Activated CD8-positive, alpha-beta T cell treated with anti-CD3 and anti-CD28 coated beads for 36 hours (primary cell): ENCODE measurements at regions of chr1 and their contacts with region 1.

Region 1: DNA sequence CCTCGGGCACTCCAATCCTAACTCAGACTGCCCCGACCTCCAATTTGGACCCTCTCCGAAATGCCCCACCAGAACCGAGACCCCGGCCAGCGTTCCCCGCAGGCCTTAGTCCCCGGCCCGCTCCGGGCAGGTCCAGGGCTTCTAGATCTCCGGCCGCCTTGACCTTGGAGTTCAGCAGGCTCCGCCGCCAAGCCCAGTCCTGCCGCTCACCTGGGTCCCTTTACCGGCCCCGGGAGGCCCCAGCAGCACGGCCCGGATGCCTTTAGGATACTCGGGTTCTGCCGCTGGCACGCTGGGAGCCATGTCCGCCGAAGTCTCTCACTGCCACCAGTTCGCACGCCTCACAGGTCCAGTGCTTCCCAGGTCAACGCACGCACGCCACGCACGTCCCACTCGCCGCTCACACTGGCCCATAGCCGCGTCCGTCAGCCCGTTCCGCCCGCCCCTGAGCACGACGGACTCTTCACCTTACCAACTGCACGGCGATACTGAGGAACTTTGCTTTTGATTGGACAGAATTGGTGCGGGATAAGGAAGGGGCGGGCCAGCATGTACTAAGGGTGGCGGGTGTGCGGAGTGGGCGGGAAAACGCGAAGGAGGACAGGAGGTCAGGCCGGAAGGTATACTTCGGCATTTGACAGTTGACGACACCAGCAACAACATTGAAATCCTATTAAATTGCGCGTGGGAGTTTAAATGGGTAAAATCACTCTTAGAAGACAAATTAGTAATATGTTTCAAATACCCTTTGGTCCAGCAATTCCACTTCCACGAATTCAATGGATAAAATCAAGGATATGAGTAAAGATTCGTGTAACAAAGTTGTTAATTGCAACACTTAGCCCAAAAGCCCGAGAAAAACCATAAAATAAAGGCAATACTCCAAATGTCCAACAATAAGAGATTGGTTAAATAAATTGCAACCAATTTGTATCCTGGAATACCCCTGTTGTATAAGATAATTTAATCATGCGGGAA is at the start of gene AK2:
- DNase-seq: peak; percentile 97
- ATAC-seq: peak; percentile 100
- H3K4me3 Mint-ChIP-seq: peak within 1 kb of the TSS; percentile 99
- H3K27ac Mint-ChIP-seq: peak within 1 kb of the TSS; percentile 89
- H3K4me1 Mint-ChIP-seq: peaks cover 33% of the 10 kb centered on the region
- H3K27me3 Mint-ChIP-seq: no peaks in the 10 kb centered on the region
- CTCF ChIP-seq: no peak
- total RNA-seq, gene AK2: 404 TPM

Region 2: GRCh38 chr1:32925403-32926162 is 111.2 kb before region 1 on chr1:
- CTCF ChIA-PET with region 1: no interaction called
- POLR2A ChIA-PET with region 1: no interaction called
- intact Hi-C with region 1: loop called (anchors 10 kb)
- DNase-seq: peak; percentile 35
- ATAC-seq: peak; percentile 60
- H3K4me3 Mint-ChIP-seq: peak overlapping the region; percentile 13
- H3K27ac Mint-ChIP-seq: no peak overlapping the region
- H3K4me1 Mint-ChIP-seq: peaks cover 12% of the 10 kb centered on the region
- H3K27me3 Mint-ChIP-seq: peaks cover 51% of the 10 kb centered on the region
- CTCF ChIP-seq: no peak